H1 (cell line): ENCODE measurements at regions of chr1 and their contacts with region 1.

Region 1: DNA sequence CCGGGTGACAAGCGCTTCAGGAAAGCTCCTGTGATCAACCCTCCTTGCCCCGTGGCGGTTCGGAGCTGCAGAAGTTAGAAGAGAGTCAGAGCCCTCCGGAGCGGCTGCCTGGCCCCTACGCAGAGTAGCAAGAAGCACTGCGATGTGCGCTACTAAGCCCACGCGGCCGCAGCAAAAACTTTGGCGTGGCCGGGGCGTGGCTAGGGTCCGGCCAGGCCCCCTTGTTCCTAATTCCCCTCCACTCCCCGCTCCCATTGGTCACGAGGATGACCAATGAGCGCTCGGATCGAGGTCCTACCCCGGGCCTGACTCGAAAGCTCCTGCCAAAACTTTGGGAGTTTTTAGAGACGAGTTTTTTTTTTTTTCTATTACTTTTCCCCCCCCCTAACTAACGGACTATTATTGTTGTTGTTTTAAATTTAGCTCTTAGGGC is at the start of gene HLX:
- DNase-seq: peak in 1 of 2 experiments; percentile 78
- H3K4me3 ChIP-seq: peak within 1 kb of the TSS; percentile 24 to 65 (median 37); a peak in 7 of 8 replicates
- H3K27ac ChIP-seq: no peak within 1 kb of the TSS
- H3K4me1 ChIP-seq: peaks cover 10 to 28% (median 16%) of the 10 kb centered on the region in 4 experiments
- H3K27me3 ChIP-seq: peaks cover 81 to 99% (median 93%) of the 10 kb centered on the region in 4 experiments
- CTCF ChIP-seq: no peak
- EP300 ChIP-seq: no peak
- POLR2A ChIP-seq: no peak
- RAD21 ChIP-seq: no peak
- total RNA-seq, gene HLX: 0.30 and 0.50 TPM in 2 replicates

Region 2: DNA sequence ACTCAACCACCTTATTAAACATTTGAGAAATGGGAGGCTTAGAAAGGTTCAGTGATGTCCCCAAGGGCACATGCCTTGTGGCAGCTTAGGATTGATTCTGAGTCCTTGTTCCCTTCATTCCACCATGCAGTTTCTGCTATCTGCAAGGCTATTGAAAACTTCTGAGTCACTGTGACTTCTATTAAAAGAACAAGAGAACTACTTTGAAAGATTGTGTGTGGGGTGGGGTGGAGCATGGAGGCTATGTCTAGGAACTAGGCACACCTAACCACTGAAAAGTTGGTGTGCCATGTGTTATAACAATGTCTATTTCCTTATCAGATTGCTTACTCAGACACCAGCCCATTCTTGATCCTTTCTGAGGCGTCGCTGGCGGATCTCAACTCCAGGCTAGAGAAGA is 81.5 kb before region 1 on chr1:
- CTCF ChIA-PET with region 1: no interaction called
- POLR2A ChIA-PET with region 1: no interaction called
- DNase-seq: no peak
- H3K4me3 ChIP-seq: no peak overlapping the region
- H3K27ac ChIP-seq: no peak overlapping the region
- H3K4me1 ChIP-seq: no peaks in the 10 kb centered on the region
- H3K27me3 ChIP-seq: no peaks in the 10 kb centered on the region
- CTCF ChIP-seq: no peak
- EP300 ChIP-seq: no peak
- POLR2A ChIP-seq: no peak
- RAD21 ChIP-seq: no peak

Region 3: GRCh38 chr1:220894025-220894923 is 15.2 kb after region 1 on chr1:
- CTCF ChIA-PET with region 1: interaction called, 32 read pairs
- POLR2A ChIA-PET with region 1: interaction called, 8 read pairs
- DNase-seq: peak in 1 of 2 experiments; percentile 68
- H3K4me3 ChIP-seq: peak overlapping the region; percentile 23 to 54 (median 32)
- H3K27ac ChIP-seq: no peak overlapping the region
- H3K4me1 ChIP-seq: peaks cover 10 to 36% (median 21%) of the 10 kb centered on the region in 4 experiments
- H3K27me3 ChIP-seq: peaks cover 74 to 81% (median 80%) of the 10 kb centered on the region in 4 experiments
- CTCF ChIP-seq: no peak
- EP300 ChIP-seq: no peak
- POLR2A ChIP-seq: no peak
- RAD21 ChIP-seq: peak; percentile 1 to 4; a peak in 1 of 4 replicates